T-cell (primary cell): ENCODE measurements at regions of chr6 and their contacts with region 1.

Region 1: DNA sequence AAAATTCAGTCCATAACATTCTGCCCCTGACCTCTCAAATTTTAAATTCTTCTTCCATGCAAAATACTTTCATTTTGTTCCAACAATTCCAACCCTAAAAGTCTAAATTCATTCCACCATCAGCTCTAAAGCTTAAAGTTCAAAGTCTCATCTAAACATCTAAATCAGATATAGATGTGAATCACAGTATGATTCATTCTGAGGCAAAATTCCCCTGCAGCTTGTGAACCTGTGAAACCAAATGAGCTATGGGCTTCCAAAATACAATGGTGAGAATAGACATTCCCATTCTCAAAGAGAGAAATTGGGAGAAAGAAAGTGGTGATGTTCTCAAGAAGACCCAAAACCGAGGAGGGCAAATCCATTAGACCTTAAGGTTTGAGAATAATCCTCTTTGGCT is 309.8 kb downstream of the HIVEP2 start:
- DNase-seq: no peak
- ATAC-seq: no peak
- H3K4me3 ChIP-seq: no peak overlapping the region
- H3K4me3 Mint-ChIP-seq: no peak overlapping the region
- H3K27ac ChIP-seq: no peak overlapping the region
- H3K27ac Mint-ChIP-seq: no peak overlapping the region
- H3K4me1 ChIP-seq: peaks cover 0 to 2% of the 10 kb centered on the region in 2 experiments
- H3K4me1 Mint-ChIP-seq: peaks cover 8 to 13% (median 13%) of the 10 kb centered on the region in 3 donors
- H3K27me3 ChIP-seq: no peaks in the 10 kb centered on the region
- H3K27me3 Mint-ChIP-seq: peaks cover 2 to 5% of the 10 kb centered on the region in 2 donors

Region 2: DNA sequence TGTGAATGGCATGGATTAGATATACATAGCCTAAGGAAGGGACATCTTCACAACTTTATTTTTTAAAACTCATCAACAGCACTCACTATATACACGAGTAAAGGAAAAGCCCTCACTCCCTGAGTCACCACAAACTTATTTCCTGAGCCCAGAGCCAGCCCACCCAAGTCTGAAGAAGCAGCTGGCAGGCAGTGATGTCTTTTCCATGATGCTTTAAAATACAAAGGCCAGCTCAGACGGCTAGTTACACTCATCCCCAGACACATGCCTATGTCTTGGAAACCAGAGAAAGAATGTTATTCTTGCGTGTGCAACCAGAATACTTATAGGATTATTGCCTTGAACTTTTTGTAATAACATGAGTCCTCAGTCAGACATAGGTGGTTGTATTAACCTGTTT is 219.0 kb before region 1 on chr6:
- CTCF ChIA-PET with region 1: no interaction called
- POLR2A ChIA-PET with region 1: no interaction called
- DNase-seq: no peak
- ATAC-seq: no peak
- H3K4me3 ChIP-seq: no peak overlapping the region
- H3K4me3 Mint-ChIP-seq: no peak overlapping the region
- H3K27ac ChIP-seq: no peak overlapping the region
- H3K27ac Mint-ChIP-seq: no peak overlapping the region
- H3K4me1 ChIP-seq: no peaks in the 10 kb centered on the region
- H3K4me1 Mint-ChIP-seq: peaks cover 0 to 5% (median 2%) of the 10 kb centered on the region in 3 donors
- H3K27me3 ChIP-seq: no peaks in the 10 kb centered on the region
- H3K27me3 Mint-ChIP-seq: peaks cover 0 to 13% of the 10 kb centered on the region in 2 donors

Region 3: GRCh38 chr6:142542704-142543233 is 92.4 kb before region 1 on chr6:
- CTCF ChIA-PET with region 1: no interaction called
- POLR2A ChIA-PET with region 1: no interaction called
- DNase-seq: no peak
- ATAC-seq: no peak
- H3K4me3 ChIP-seq: no peak overlapping the region
- H3K4me3 Mint-ChIP-seq: no peak overlapping the region
- H3K27ac ChIP-seq: no peak overlapping the region
- H3K27ac Mint-ChIP-seq: peak overlapping the region in 1 of 2 donors; percentile 40
- H3K4me1 ChIP-seq: peaks cover 9 to 19% of the 10 kb centered on the region in 2 experiments
- H3K4me1 Mint-ChIP-seq: peaks cover 20 to 26% (median 24%) of the 10 kb centered on the region in 3 donors
- H3K27me3 ChIP-seq: peaks cover 0 to 4% of the 10 kb centered on the region in 2 experiments
- H3K27me3 Mint-ChIP-seq: no peaks in the 10 kb centered on the region

Region 4: DNA sequence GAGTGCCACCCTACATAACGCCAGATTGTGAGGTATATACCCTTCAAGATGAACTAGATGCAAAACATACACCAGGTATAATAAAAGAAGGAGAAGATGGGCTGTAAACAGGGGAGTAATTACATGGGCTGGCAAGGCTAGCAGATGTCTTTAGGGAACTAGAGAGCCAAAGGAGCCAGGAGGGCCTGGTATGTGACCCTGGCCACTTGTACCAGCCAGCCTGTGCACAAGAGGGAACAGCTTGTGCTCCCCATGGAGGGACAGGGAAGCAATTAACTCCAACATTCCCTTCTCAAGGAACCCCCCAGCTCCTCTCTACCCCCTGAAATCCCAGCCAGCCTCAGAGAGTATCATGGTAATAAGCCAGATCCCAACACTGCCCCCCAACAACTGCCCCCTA is 169.9 kb after region 1 on chr6:
- CTCF ChIA-PET with region 1: interaction called in 1 of 2 experiments, 16 read pairs
- POLR2A ChIA-PET with region 1: no interaction called
- DNase-seq: no peak
- ATAC-seq: no peak
- H3K4me3 ChIP-seq: no peak overlapping the region
- H3K4me3 Mint-ChIP-seq: no peak overlapping the region
- H3K27ac ChIP-seq: no peak overlapping the region
- H3K27ac Mint-ChIP-seq: peak overlapping the region; percentile 76 to 88
- H3K4me1 ChIP-seq: peaks cover 4 to 7% of the 10 kb centered on the region in 2 experiments
- H3K4me1 Mint-ChIP-seq: peaks cover 92 to 95% (median 93%) of the 10 kb centered on the region in 3 donors
- H3K27me3 ChIP-seq: no peaks in the 10 kb centered on the region
- H3K27me3 Mint-ChIP-seq: no peaks in the 10 kb centered on the region